ENCODE measurements at regions of chr12 and their contacts with region 1.

Region 1: GRCh38 chr12:42144408-42145196 is at the start of gene GXYLT1:
- DNase-seq: peak; percentile 87
- ATAC-seq: peak; percentile 94
- H3K4me3 Mint-ChIP-seq: peak within 1 kb of the TSS; percentile 95
- H3K27ac Mint-ChIP-seq: peak within 1 kb of the TSS; percentile 83
- H3K4me1 Mint-ChIP-seq: peaks cover 40% of the 10 kb centered on the region
- H3K27me3 Mint-ChIP-seq: no peaks in the 10 kb centered on the region
- CTCF ChIP-seq: no peak
- total RNA-seq, gene GXYLT1: 6.9 and 7.9 TPM in 2 replicates

Region 2: GRCh38 chr12:42097971-42098370 is 46.6 kb before region 1 on chr12:
- CTCF ChIA-PET with region 1: no interaction called
- POLR2A ChIA-PET with region 1: no interaction called
- intact Hi-C with region 1: loop called (anchors 2 kb)
- DNase-seq: no peak
- ATAC-seq: peak; percentile 82
- H3K4me3 Mint-ChIP-seq: peak overlapping the region; percentile 81
- H3K27ac Mint-ChIP-seq: peak overlapping the region; percentile 86
- H3K4me1 Mint-ChIP-seq: peaks cover 31% of the 10 kb centered on the region
- H3K27me3 Mint-ChIP-seq: no peaks in the 10 kb centered on the region
- CTCF ChIP-seq: no peak

Region 3: DNA sequence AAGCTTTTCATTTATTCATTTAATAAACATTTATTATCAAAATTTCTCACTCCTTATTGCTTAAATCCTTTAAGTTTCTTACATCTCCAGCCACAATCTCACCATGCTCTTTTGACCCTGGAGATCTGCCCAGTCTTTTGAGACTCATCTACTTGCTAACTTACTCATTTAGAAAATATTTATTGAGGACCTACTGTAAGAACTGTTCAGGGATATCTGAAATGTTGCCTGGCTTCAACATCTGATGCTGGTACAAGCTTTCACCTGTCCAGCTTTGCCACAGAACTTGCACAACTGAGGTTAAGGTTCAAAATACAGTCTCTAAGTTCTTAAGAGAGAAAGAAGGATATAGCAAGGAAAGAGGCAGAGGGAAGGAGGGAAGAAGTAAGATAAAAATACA is 17.6 kb after region 1 on chr12:
- CTCF ChIA-PET with region 1: no interaction called
- POLR2A ChIA-PET with region 1: no interaction called
- intact Hi-C with region 1: loop called (anchors 2 kb)
- DNase-seq: no peak
- ATAC-seq: no peak
- H3K4me3 Mint-ChIP-seq: no peak overlapping the region
- H3K27ac Mint-ChIP-seq: no peak overlapping the region
- H3K4me1 Mint-ChIP-seq: peaks cover 25% of the 10 kb centered on the region
- H3K27me3 Mint-ChIP-seq: no peaks in the 10 kb centered on the region
- CTCF ChIP-seq: no peak

Region 4: DNA sequence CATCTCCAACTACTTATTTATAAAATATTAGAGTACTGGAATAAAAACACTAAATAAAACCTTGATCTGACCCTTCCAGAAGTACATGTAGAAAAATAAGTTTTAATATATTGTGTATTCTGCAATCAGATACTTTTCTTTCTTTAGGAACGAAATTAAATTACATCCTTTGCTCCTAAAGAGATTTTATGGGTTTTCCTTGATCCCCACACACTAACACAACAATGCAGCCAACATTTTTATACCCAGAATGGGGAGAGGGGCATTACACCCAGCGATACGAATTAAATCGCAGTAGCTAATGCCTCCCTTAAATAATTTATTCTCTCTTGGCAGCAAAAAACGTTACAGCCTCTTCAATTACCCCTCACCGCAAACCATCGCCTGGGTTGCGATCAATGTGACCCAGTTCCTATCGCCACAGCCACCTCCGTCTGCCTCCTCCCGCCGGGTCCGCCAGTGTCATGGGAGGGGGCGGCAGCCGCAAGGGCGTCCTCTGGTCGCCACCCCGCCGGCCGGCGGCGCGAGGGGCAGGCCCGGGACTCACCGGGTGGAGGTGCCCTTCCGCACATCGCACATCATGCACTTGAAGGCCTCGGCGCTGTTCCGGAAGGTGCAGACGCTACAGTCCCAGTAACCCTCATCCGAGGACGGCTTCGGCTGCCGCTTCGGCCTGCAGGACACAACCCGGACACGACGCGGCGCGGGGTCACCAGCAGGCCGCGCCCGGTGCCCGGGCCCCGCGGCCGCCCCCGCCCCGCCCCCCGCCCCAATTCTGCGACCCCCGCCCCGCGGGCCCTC is 92.7 kb after region 1 on chr12:
- CTCF ChIA-PET with region 1: no interaction called
- POLR2A ChIA-PET with region 1: interaction called, 5 read pairs
- intact Hi-C with region 1: loop called (anchors 1 kb)
- DNase-seq: peak; percentile 69
- ATAC-seq: peak; percentile 78
- H3K4me3 Mint-ChIP-seq: peak overlapping the region; percentile 93
- H3K27ac Mint-ChIP-seq: peak overlapping the region; percentile 92
- H3K4me1 Mint-ChIP-seq: peaks cover 37% of the 10 kb centered on the region
- H3K27me3 Mint-ChIP-seq: no peaks in the 10 kb centered on the region
- CTCF ChIP-seq: no peak

Region 5: DNA sequence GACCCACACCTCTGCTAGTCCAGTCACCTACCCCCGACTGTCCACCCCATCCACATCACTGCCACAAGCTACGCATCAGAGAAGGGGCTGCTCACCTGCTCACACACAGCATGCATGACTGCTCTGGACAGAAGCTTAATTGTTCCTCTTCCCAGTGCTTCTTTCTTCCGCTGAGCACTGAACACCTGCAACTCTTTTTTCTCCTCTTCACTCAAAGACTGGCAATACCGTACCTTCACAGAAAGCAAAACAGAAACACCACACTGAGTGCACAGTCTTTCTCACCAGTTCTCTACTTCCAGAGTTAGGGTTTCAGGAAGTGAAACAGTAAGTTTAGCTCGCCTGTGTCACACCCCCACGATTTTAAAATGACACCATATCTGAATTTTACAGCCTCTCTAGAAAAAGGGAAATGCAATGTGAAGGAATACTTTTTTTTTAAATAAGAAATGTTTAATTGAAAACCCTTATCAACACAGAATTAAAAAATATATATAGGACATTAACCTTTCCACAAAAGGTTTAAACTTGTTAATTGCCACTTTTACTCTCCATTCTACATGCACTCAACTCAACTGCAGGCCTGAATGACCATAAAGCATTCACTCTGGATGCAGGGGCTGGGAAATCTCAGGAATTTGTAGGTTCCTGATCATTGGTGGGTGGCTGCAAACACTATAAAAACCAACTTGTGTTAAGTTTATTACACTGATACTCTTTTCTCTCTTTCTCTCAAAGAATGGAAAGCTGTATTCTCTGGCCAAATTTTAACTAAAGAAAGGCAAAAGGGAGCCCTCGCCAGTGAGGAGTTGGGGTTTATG is 325.0 kb after region 1 on chr12:
- CTCF ChIA-PET with region 1: no interaction called
- POLR2A ChIA-PET with region 1: no interaction called
- intact Hi-C with region 1: loop called (anchors 5 kb)
- DNase-seq: peak; percentile 37
- ATAC-seq: peak; percentile 94
- H3K4me3 Mint-ChIP-seq: peak overlapping the region; percentile 87
- H3K27ac Mint-ChIP-seq: peak overlapping the region; percentile 97
- H3K4me1 Mint-ChIP-seq: peaks cover 76% of the 10 kb centered on the region
- H3K27me3 Mint-ChIP-seq: no peaks in the 10 kb centered on the region
- CTCF ChIP-seq: no peak

Region 6: DNA sequence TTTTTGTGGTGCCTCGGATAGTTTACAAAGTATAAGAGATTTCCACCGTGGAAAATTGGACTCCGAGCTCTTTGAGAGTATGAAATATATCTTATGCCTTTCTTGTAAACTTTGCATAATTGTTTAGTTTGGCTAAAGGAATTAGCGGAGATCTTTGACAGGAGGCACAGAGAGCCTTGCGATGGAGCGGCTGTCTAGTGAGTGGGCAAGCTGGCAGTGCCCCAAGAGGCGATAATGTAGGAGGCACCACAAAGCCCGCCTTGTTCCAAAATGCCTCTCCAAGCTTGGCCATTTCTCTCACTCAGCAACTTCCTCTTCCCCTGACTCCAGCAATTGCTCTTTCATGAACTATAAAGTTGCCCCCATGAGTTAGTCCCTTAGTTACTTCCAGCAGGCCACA is 715.0 kb after region 1 on chr12:
- CTCF ChIA-PET with region 1: no interaction called
- POLR2A ChIA-PET with region 1: no interaction called
- intact Hi-C with region 1: no loop called
- DNase-seq: no peak
- ATAC-seq: no peak
- H3K4me3 Mint-ChIP-seq: no peak overlapping the region
- H3K27ac Mint-ChIP-seq: no peak overlapping the region
- H3K4me1 Mint-ChIP-seq: no peaks in the 10 kb centered on the region
- H3K27me3 Mint-ChIP-seq: no peaks in the 10 kb centered on the region
- CTCF ChIP-seq: no peak

Measured in activated B cell treated with CpG ODN at 0.5 μM for 24 hours (primary cell).